Endothelial cell of umbilical vein (primary cell): ENCODE measurements at regions of chr14 and their contacts with region 1.

Region 1: GRCh38 chr14:74612350-74613021 is 449 bp upstream of the LTBP2 start:
- DNase-seq: peak; percentile 77
- H3K4me3 ChIP-seq: peak overlapping the region; percentile 81 to 88 (median 88)
- H3K27ac ChIP-seq: peak overlapping the region; percentile 52
- H3K4me1 ChIP-seq: peaks cover 65% of the 10 kb centered on the region
- H3K27me3 ChIP-seq: no peaks in the 10 kb centered on the region
- CTCF ChIP-seq: peak in 1 of 2 donors; percentile 74
- POLR2A ChIP-seq: peak; percentile 48

Region 2: DNA sequence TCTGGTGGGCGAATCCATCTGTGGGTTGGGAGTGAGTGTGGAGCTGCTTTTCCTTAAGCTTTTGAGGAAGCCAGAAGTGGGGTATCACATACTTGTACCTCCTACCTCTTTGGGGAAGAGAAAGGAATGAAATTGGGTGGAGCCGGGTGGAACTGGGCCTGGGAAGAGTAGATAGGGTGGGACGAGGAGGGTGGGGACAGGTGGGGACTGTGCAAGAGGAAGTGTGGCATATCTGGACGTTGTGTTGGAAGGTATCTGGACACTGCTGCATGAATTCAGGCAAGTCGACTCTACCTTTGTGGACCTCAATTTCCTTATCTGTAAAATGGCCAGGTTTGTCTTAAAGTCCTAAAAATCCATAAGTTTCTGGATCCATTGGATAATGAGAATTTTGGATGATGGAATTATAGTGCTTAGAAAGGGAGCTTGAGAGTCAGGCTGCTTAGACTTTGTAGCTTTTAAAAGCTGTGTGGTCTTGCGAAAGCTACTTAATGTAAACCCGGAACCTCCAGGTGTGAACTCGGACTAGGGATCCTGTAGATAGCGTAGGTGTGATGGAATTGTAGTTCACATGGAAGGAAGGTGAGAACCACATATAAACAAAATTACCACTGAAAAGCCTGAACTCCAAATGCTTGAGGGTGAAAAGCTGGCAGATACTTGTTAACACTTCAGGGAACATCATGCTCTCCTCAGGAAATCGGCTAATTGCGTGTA is 262.1 kb before region 1 on chr14:
- CTCF ChIA-PET with region 1: no interaction called
- POLR2A ChIA-PET with region 1: no interaction called
- dilution Hi-C with region 1: no loop called
- intact Hi-C with region 1: no loop called
- DNase-seq: no peak
- H3K4me3 ChIP-seq: no peak overlapping the region
- H3K27ac ChIP-seq: no peak overlapping the region
- H3K4me1 ChIP-seq: no peaks in the 10 kb centered on the region
- H3K27me3 ChIP-seq: peaks cover 38 to 40% of the 10 kb centered on the region in 2 experiments
- CTCF ChIP-seq: no peak
- POLR2A ChIP-seq: no peak

Region 3: DNA sequence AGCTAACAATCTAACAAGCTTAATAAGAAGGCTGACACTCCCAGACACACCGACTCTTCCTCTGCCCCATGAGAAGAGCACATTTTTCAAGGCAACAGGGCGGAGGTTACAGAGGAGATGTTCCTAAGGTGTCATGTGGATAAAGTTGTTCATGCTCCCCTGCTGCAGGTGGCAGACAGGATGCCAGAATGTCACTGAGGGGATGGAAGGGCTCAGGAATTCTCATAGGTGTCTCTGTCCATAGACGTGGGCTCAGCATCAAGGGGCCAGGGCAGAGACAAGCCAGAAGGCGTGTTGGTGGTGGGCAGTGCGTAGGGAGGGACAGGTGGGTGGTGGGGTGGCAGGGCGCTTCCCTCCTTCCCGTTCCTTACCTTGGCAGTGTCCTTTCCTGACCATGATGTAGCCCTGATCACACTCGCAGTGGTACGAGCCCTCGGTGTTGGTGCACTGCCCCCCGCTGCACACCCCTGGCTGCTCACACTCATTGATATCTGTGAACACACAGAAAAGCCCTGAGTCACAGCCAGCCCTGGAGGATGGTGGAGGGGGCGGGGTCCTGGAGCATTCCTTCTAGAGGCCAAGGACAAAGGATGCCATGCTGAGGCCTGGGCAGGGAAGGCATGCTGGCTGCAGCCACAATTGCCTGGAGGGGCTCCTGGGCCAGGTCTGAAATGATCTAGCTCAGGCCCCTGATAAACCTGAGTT is 95.9 kb before region 1 on chr14:
- CTCF ChIA-PET with region 1: no interaction called
- POLR2A ChIA-PET with region 1: no interaction called
- dilution Hi-C with region 1: no loop called
- intact Hi-C with region 1: no loop called
- DNase-seq: no peak
- H3K4me3 ChIP-seq: no peak overlapping the region
- H3K27ac ChIP-seq: no peak overlapping the region
- H3K4me1 ChIP-seq: no peaks in the 10 kb centered on the region
- H3K27me3 ChIP-seq: no peaks in the 10 kb centered on the region
- CTCF ChIP-seq: no peak
- POLR2A ChIP-seq: peak; percentile 8

Region 4: DNA sequence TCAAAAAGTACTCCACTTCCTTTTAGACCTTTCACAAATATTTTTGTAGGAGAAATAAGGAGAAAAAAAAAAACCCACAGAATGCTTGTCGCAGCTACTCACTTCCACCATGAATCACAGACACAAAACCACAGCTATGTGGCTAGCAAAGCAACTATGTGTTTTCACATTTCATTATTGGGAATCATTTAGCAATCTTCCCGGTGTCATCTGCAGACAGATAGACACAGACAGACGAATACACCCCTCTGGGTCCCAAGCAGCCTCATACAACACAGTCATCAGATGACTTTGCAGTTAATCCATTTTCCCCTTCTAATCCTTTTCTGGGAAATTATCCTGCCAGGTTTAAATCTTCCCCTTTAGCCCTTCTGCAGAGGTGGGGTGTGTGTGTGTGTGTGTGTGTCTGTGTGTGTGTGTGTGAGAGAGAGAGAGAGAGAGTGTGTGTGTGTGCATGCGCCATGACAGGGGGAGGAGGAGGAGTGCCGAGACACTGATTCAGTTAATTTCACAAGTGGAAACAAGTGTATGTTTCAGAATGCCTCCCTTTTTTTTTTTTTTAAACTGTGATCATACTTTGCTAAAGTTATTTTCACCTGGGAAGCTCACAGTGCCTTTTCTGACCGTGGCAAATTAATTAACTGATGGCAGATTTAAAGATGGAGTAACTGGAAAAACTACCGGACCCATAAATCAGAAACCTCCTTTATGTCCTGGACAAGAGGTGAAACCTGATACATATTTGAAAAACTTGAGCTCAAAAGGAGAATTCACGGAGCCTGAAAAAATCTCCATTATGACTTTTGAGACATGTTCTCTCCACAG is 40.4 kb before region 1 on chr14:
- CTCF ChIA-PET with region 1: interaction called, 11 read pairs
- POLR2A ChIA-PET with region 1: no interaction called
- dilution Hi-C with region 1: no loop called
- intact Hi-C with region 1: no loop called
- DNase-seq: peak; percentile 88
- H3K4me3 ChIP-seq: peak overlapping the region in 1 of 3 experiments; percentile 17
- H3K27ac ChIP-seq: peak overlapping the region; percentile 92
- H3K4me1 ChIP-seq: peaks cover 59% of the 10 kb centered on the region
- H3K27me3 ChIP-seq: no peaks in the 10 kb centered on the region
- CTCF ChIP-seq: no peak
- POLR2A ChIP-seq: peak; percentile 64

Region 5: DNA sequence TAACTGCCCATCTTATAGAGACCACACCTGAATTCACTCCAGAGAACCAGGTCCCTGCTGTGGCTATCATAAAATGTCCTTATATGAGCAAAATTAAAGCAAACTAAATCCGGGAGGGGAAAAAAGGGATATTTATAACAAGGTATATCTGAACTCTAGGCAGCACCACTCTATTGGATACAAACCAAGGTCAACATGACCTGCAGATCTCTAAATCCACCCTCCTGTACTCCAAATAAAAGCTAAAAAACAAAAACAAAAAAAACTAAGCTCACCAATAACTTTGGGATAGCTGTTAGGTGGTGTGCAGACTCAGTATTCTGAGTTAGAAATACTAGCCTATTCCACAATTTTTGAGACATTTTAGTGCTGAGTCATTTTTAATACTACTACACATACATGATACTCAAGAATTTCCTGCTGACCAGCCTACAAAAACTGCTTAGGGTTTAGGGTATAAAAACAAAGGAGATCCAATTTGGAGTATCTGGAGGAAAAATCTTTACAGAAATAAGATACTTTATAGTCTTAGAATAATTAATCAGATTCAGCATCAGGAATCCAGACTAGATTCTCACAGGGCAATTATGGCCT is 46.1 kb after region 1 on chr14:
- CTCF ChIA-PET with region 1: interaction called, 14 read pairs
- POLR2A ChIA-PET with region 1: no interaction called
- dilution Hi-C with region 1: no loop called
- intact Hi-C with region 1: no loop called
- DNase-seq: peak; percentile 51
- H3K4me3 ChIP-seq: no peak overlapping the region
- H3K27ac ChIP-seq: peak overlapping the region; percentile 86
- H3K4me1 ChIP-seq: peaks cover 32% of the 10 kb centered on the region
- H3K27me3 ChIP-seq: no peaks in the 10 kb centered on the region
- CTCF ChIP-seq: no peak
- POLR2A ChIP-seq: no peak

Region 6: DNA sequence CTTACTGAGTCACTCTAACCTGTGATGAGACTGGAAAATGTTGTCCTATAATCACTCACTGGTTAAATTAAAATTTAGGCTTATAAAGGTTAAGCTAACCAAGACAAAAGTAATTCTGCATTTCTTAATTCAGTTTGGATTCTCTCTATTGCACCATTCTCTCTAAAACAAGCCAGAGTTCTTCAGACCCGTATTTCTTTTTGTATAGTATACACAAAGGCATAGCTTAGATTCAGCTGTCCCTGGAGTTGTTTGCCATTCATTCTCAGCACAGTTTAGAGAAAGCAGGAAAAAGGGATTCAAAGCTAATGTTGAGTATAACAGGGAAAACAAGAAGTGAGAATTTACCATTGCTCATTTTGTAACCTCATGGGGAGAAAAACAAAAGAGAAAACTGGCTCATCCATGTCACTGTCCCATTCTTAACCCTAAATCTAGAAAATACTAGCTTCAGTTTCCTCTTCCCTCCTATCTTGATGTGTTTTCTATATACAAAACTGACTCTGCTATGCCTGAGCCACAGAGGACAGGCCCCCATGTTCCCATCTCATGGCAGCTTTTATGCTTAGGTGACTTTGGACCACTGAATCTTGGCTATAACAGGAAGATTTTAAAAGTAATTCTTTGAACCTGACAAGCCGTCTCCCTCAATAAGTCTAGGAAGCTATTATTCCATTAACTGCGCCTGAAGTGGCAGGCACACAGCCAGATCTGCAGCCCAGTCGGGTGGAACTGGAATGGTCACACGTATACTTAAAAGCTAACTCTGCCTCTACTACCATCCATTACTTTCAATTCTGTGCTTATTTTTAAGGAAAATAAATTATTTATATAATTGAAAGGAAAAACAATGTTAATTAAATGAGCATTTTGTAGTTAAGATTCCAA is 93.4 kb after region 1 on chr14:
- CTCF ChIA-PET with region 1: interaction called, 17 read pairs
- POLR2A ChIA-PET with region 1: no interaction called
- dilution Hi-C with region 1: no loop called
- intact Hi-C with region 1: no loop called
- DNase-seq: no peak
- H3K4me3 ChIP-seq: no peak overlapping the region
- H3K27ac ChIP-seq: no peak overlapping the region
- H3K4me1 ChIP-seq: no peaks in the 10 kb centered on the region
- H3K27me3 ChIP-seq: no peaks in the 10 kb centered on the region
- CTCF ChIP-seq: no peak
- POLR2A ChIP-seq: no peak

Region 7: DNA sequence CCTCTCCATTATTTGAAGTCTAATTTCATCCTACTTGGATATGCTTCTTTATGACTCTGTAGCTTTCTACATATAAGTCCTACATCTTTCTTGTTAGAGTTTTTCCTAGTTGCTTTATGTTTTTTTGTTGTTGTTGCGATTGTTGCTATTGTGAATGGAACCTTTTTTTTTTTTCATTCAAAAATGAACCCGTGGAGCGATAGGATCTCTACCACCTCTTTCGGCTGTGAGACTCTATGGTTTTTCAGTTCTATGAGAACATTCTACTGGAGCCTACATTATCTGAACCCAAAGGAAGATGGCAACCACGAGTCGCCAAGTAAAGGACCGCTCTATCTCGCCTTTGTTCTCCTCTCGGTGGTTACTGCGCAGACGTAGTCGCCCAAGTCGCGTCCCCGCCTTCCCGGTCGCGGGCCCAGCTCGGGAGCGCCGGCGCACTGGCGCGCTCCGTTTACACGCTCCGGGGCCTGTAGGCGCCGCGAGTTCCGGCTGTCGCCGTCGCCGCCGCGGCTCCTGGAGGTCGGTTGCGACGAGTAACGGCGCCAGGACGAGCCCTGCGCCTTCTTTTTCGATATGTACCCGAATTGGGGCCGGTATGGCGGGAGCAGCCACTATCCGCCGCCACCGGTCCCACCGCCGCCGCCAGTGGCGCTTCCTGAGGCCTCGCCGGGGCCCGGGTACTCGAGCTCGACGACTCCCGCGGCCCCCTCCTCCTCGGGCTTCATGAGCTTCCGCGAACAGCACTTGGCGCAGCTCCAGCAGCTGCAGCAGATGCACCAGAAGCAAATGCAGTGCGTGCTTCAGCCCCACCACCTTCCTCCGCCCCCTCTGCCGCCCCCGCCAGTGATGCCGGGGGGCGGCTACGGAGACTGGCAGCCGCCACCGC is 150.7 kb after region 1 on chr14 and contains the start of gene YLPM1:
- CTCF ChIA-PET with region 1: interaction called, 20 read pairs
- POLR2A ChIA-PET with region 1: interaction called, 3 read pairs
- dilution Hi-C with region 1: no loop called
- intact Hi-C with region 1: loop called (anchors 1 kb)
- DNase-seq: peak; percentile 97
- H3K4me3 ChIP-seq: peak within 1 kb of the TSS; percentile 59 to 92 (median 90)
- H3K27ac ChIP-seq: peak within 1 kb of the TSS; percentile 86
- H3K4me1 ChIP-seq: peaks cover 25% of the 10 kb centered on the region
- H3K27me3 ChIP-seq: no peaks in the 10 kb centered on the region
- CTCF ChIP-seq: peak; percentile 42 to 62
- POLR2A ChIP-seq: peak; percentile 86
- total RNA-seq, gene YLPM1: 81.0 and 85.7 TPM in 2 replicates

Region 8: DNA sequence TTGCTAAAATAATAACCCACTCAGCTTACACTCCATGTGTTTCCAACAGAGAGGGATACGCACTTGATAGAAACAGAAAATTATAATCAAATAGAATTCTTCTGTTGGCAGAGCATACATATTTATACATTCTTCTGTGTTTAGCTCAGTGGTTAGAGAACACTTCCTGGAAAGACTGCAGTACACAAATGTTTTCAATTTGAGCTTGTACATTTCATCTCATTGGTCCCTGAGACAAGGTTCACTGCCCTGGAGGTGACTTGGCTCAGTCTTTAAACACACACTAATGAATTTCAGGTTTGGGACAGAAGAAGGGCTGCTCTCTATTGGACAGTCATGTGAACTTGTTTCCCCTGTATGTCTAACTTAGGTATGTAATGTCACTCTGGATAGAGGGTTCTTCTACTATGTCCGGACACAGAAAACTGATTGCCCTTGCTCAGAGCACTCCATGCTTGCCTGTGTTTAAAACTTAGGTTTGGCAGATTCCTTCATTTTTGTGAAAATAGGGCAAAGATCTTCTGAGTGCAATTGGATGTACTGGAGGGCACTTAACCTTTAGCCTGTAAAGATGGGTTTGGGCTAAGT is 240.5 kb after region 1 on chr14:
- CTCF ChIA-PET with region 1: interaction called, 10 read pairs
- POLR2A ChIA-PET with region 1: no interaction called
- dilution Hi-C with region 1: no loop called
- intact Hi-C with region 1: no loop called
- DNase-seq: no peak
- H3K4me3 ChIP-seq: no peak overlapping the region
- H3K27ac ChIP-seq: no peak overlapping the region
- H3K4me1 ChIP-seq: no peaks in the 10 kb centered on the region
- H3K27me3 ChIP-seq: no peaks in the 10 kb centered on the region
- CTCF ChIP-seq: no peak
- POLR2A ChIP-seq: no peak

Region 9: GRCh38 chr14:74905375-74906142 is 293.1 kb after region 1 on chr14:
- CTCF ChIA-PET with region 1: interaction called, 46 read pairs
- POLR2A ChIA-PET with region 1: no interaction called
- dilution Hi-C with region 1: no loop called
- intact Hi-C with region 1: loop called (anchors 5 kb)
- DNase-seq: peak; percentile 52
- H3K4me3 ChIP-seq: no peak overlapping the region
- H3K27ac ChIP-seq: no peak overlapping the region
- H3K4me1 ChIP-seq: peaks cover 5% of the 10 kb centered on the region
- H3K27me3 ChIP-seq: no peaks in the 10 kb centered on the region
- CTCF ChIP-seq: peak; percentile 94 to 95
- POLR2A ChIP-seq: no peak